CD4-positive, alpha-beta T cell (primary cell): ENCODE measurements at regions of chr16 and their contacts with region 1.

Region 1: GRCh38 chr16:29784901-29785500 is 5.5 kb upstream of the KIF22 start:
- DNase-seq: peak; percentile 55 to 87 (median 74)
- ATAC-seq: peak; percentile 91
- H3K4me3 ChIP-seq: peak overlapping the region; percentile 40
- H3K4me3 Mint-ChIP-seq: peak overlapping the region; percentile 80
- H3K27ac ChIP-seq: no peak overlapping the region
- H3K27ac Mint-ChIP-seq: peak overlapping the region; percentile 18
- H3K4me1 ChIP-seq: peaks cover 25% of the 10 kb centered on the region
- H3K4me1 Mint-ChIP-seq: peaks cover 33% of the 10 kb centered on the region
- H3K27me3 ChIP-seq: no peaks in the 10 kb centered on the region
- H3K27me3 Mint-ChIP-seq: no peaks in the 10 kb centered on the region
- CTCF ChIP-seq: peak; percentile 85

Region 2: DNA sequence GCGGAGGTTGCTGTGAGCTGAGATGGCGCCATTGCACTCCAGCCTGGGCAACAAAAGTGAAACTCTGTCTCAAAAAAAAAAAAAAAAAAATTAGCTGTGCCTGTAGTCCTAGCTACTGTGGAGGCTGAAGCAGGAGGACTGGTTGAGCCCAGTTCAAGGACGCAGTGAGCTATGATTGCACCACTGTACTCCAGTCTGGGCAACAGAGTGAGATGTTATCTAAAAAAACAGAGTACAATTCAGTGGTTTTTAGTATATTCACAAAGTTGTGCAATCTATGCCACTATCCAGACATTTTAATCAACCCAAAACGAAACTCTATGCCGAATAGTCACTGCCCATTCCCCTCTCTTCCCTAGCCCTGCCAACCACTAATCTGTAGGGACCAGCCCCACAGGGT is 64.3 kb before region 1 on chr16:
- CTCF ChIA-PET with region 1: interaction called, 20 read pairs
- POLR2A ChIA-PET with region 1: interaction called, 5 read pairs
- intact Hi-C with region 1: loop called in 1 of 2 experiments (anchors 5 kb)
- DNase-seq: no peak
- ATAC-seq: no peak
- H3K4me3 ChIP-seq: no peak overlapping the region
- H3K4me3 Mint-ChIP-seq: no peak overlapping the region
- H3K27ac ChIP-seq: no peak overlapping the region
- H3K27ac Mint-ChIP-seq: no peak overlapping the region
- H3K4me1 ChIP-seq: peaks cover 3% of the 10 kb centered on the region
- H3K4me1 Mint-ChIP-seq: peaks cover 21% of the 10 kb centered on the region
- H3K27me3 ChIP-seq: no peaks in the 10 kb centered on the region
- H3K27me3 Mint-ChIP-seq: no peaks in the 10 kb centered on the region
- CTCF ChIP-seq: no peak

Region 3: GRCh38 chr16:29729116-29729521 is 55.9 kb before region 1 on chr16:
- CTCF ChIA-PET with region 1: interaction called, 20 read pairs
- POLR2A ChIA-PET with region 1: interaction called, 8 read pairs
- intact Hi-C with region 1: loop called in 1 of 2 experiments (anchors 5 kb)
- DNase-seq: peak in 2 of 14 experiments; percentile 31 to 36
- ATAC-seq: no peak
- H3K4me3 ChIP-seq: no peak overlapping the region
- H3K4me3 Mint-ChIP-seq: no peak overlapping the region
- H3K27ac ChIP-seq: no peak overlapping the region
- H3K27ac Mint-ChIP-seq: no peak overlapping the region
- H3K4me1 ChIP-seq: peaks cover 28% of the 10 kb centered on the region
- H3K4me1 Mint-ChIP-seq: peaks cover 28% of the 10 kb centered on the region
- H3K27me3 ChIP-seq: no peaks in the 10 kb centered on the region
- H3K27me3 Mint-ChIP-seq: no peaks in the 10 kb centered on the region
- CTCF ChIP-seq: peak; percentile 58